Activated naive CD4-positive, alpha-beta T cell treated with anti-CD3 and anti-CD28 coated beads for 36 hours (primary cell): ENCODE measurements at regions of chr7 and their contacts with region 1.

Region 1: GRCh38 chr7:33050535-33051318 is 11.8 kb downstream of the NT5C3A start:
- DNase-seq: peak; percentile 38
- H3K4me3 Mint-ChIP-seq: no peak overlapping the region
- H3K27ac Mint-ChIP-seq: no peak overlapping the region
- H3K4me1 Mint-ChIP-seq: peaks cover 54% of the 10 kb centered on the region
- H3K27me3 Mint-ChIP-seq: no peaks in the 10 kb centered on the region

Region 2: DNA sequence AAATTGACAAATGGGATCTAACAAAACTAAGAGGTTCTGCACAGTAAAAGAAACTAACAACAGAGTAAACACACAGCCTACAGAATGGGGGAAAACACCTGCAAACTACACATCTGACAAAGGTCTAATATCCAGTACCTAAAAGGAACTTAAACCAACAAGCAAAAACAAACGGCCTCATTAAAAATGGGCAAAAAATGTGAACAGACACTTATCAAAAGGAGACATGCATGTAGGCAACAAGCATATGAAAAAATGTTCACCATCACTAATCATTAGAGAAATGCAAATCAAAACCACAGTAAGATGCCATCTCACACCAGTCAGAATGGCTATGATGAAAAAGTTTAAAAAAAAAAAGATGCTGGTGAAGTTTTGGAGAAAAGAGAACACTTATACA is 356.5 kb before region 1 on chr7:
- CTCF ChIA-PET with region 1: no interaction called
- intact Hi-C with region 1: loop called (anchors 5 kb)
- DNase-seq: no peak
- H3K4me3 Mint-ChIP-seq: no peak overlapping the region
- H3K27ac Mint-ChIP-seq: no peak overlapping the region
- H3K4me1 Mint-ChIP-seq: peaks cover 8% of the 10 kb centered on the region
- H3K27me3 Mint-ChIP-seq: peaks cover 2% of the 10 kb centered on the region

Region 3: GRCh38 chr7:32803406-32804141 is 247.2 kb before region 1 on chr7:
- CTCF ChIA-PET with region 1: no interaction called
- intact Hi-C with region 1: loop called (anchors 1 kb)
- DNase-seq: no peak
- H3K4me3 Mint-ChIP-seq: no peak overlapping the region
- H3K27ac Mint-ChIP-seq: no peak overlapping the region
- H3K4me1 Mint-ChIP-seq: no peaks in the 10 kb centered on the region
- H3K27me3 Mint-ChIP-seq: no peaks in the 10 kb centered on the region

Region 4: GRCh38 chr7:33072471-33072870 is 21.7 kb after region 1 on chr7:
- CTCF ChIA-PET with region 1: no interaction called
- intact Hi-C with region 1: no loop called
- DNase-seq: no peak
- H3K4me3 Mint-ChIP-seq: no peak overlapping the region
- H3K27ac Mint-ChIP-seq: no peak overlapping the region
- H3K4me1 Mint-ChIP-seq: peaks cover 9% of the 10 kb centered on the region
- H3K27me3 Mint-ChIP-seq: no peaks in the 10 kb centered on the region

Region 5: GRCh38 chr7:33217595-33217994 is 166.9 kb after region 1 on chr7:
- CTCF ChIA-PET with region 1: no interaction called
- intact Hi-C with region 1: no loop called
- DNase-seq: no peak
- H3K4me3 Mint-ChIP-seq: no peak overlapping the region
- H3K27ac Mint-ChIP-seq: no peak overlapping the region
- H3K4me1 Mint-ChIP-seq: no peaks in the 10 kb centered on the region
- H3K27me3 Mint-ChIP-seq: no peaks in the 10 kb centered on the region

Region 6: DNA sequence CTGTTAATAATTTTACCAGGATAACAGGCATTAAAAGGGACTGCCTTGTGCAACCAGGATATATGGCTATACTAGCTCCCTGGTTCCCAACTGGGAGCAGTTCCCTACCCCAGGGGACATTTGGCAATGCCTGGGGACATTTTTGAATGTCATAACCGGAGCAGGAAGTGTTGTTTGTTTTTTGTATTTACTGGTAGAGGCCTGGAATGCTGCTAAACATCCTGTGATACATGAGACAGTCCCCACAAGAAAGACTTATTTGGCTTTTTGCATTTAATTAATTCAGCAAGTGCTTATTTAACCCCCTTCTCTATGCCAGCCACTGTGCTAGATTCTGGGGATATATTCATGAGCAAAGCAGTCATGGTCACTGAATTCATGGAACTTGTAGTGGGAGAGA is 259.8 kb after region 1 on chr7:
- CTCF ChIA-PET with region 1: no interaction called
- intact Hi-C with region 1: no loop called
- DNase-seq: no peak
- H3K4me3 Mint-ChIP-seq: no peak overlapping the region
- H3K27ac Mint-ChIP-seq: no peak overlapping the region
- H3K4me1 Mint-ChIP-seq: no peaks in the 10 kb centered on the region
- H3K27me3 Mint-ChIP-seq: no peaks in the 10 kb centered on the region